Astrocyte of the cerebellum (primary cell): ENCODE measurements at regions of chr17 and their contacts with region 1.

Region 1: GRCh38 chr17:60421273-60421934 is 885 bp upstream of the CHCT1 start:
- DNase-seq: no peak
- H3K4me3 ChIP-seq: peak overlapping the region; percentile 42
- CTCF ChIP-seq: peak; percentile 84

Region 2: GRCh38 chr17:60463157-60463835 is 41.9 kb after region 1 on chr17:
- in situ Hi-C with region 1: no loop called
- DNase-seq: no peak
- H3K4me3 ChIP-seq: no peak overlapping the region
- CTCF ChIP-seq: no peak

Region 3: DNA sequence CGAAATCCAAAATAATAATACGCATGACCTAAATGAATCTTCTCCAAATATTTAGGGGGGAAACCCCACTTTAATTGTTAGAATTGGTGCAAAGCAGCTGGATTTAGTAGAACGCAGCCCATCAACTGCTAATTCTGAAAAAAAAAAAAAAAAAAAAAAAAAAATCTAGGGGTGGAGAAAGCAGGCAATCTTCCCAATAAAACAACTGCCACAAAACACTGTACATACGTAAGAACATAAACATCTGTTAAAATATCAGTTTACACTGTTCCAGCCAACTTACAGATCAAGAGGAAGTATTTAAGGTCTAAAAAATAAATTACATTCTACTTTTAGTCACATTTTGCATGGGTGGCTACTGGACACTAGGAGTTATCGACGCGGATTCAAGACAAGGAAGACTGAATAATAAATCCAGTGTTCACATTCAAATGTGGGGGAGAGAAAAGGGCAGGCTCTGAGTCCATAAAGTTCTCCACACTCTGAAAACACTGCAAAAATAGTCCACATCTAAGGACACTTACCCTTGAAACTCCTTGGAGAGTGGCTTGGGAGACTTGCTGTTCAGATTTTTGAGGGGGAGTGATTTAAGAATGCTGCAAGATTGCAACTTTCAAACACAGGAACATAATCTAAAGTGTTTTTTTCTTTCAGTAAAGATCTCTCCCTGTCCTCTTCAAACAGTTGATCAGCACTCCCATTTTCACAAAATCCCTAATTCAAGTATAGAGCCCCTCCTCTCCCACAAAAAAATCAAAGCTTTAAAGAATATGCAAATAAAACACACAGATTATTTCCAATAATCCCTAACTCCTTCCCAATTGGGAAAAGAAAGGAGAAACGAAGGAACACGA is 103.3 kb after region 1 on chr17:
- in situ Hi-C with region 1: loop called (anchors 25 kb)
- DNase-seq: no peak
- H3K4me3 ChIP-seq: peak overlapping the region; percentile 63
- CTCF ChIP-seq: no peak